Esophagus muscularis mucosa (tissue), 4 donors: ENCODE measurements at regions of chr9 and their contacts with region 1.

Region 1: GRCh38 chr9:132274861-132275260 is 79.9 kb downstream of the SETX start:
- DNase-seq: no peak
- H3K4me3 ChIP-seq: no peak overlapping the region
- H3K27ac ChIP-seq: no peak overlapping the region
- H3K4me1 ChIP-seq: no peaks in the 10 kb centered on the region
- H3K27me3 ChIP-seq: no peaks in the 10 kb centered on the region
- CTCF ChIP-seq: no peak
- EP300 ChIP-seq: no peak
- POLR2A ChIP-seq: no peak

Region 2: DNA sequence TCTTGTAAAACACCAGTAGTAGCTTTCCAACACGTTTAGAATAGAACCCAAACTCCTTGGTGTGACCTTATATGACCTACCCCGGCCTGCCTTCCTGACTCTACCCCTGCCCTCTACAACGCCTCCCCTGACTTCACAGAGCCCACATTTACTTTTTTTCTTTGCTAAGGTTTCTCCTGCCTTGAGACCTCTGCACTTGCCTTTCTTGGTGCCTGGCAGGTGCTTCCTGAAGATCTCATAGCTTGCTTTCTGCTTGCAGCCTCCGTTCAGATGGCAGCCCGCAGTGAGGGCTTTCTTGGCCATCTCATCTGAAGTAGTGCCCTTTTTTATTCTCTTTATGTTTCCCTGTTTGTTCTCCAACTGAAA is 1125.2 kb before region 1 on chr9:
- intact Hi-C with region 1: loop called (anchors 10 kb)
- DNase-seq: no peak
- H3K4me3 ChIP-seq: no peak overlapping the region
- H3K27ac ChIP-seq: no peak overlapping the region
- H3K4me1 ChIP-seq: no peaks in the 10 kb centered on the region
- H3K27me3 ChIP-seq: no peaks in the 10 kb centered on the region
- CTCF ChIP-seq: no peak
- EP300 ChIP-seq: no peak
- POLR2A ChIP-seq: no peak

Region 3: DNA sequence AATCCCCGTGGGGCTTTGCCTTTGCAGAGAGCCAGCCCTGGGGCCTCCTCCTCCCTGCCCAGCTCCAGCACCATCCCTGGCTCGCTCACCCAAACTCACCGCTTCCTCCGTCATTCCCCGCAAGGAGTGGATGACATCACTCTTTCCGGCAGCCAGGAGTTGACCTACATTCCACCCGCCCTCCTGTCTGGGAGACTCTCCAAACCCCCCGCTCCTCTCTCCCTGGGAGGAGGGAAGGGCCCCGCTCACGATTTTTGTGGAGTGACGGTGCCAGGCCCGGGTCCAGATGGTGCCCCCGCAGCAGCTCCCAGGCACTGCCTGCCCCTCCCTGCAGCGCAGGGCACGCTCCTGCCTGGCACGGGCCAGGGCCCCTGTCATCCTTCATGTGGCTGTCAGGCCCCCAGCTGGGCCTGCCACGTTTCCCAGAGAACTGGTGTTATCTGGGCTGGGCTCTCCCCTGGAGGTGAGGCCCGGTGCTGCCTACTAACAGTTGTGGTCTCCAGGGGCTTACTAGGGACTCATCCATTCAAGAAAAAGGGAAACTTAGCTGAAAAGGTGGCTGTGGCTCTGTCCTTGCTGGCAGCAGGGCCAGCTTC is 60.7 kb before region 1 on chr9:
- intact Hi-C with region 1: no loop called
- DNase-seq: peak; percentile 93
- H3K4me3 ChIP-seq: peak overlapping the region in 3 of 4 donors; percentile 24 to 32 (median 25)
- H3K27ac ChIP-seq: peak overlapping the region; percentile 62 to 75 (median 67)
- H3K4me1 ChIP-seq: peaks cover 10 to 15% (median 13%) of the 10 kb centered on the region in 4 donors
- H3K27me3 ChIP-seq: no peaks in the 10 kb centered on the region
- CTCF ChIP-seq: peak in 1 of 3 experiments; percentile 9
- EP300 ChIP-seq: no peak
- POLR2A ChIP-seq: no peak

Region 4: DNA sequence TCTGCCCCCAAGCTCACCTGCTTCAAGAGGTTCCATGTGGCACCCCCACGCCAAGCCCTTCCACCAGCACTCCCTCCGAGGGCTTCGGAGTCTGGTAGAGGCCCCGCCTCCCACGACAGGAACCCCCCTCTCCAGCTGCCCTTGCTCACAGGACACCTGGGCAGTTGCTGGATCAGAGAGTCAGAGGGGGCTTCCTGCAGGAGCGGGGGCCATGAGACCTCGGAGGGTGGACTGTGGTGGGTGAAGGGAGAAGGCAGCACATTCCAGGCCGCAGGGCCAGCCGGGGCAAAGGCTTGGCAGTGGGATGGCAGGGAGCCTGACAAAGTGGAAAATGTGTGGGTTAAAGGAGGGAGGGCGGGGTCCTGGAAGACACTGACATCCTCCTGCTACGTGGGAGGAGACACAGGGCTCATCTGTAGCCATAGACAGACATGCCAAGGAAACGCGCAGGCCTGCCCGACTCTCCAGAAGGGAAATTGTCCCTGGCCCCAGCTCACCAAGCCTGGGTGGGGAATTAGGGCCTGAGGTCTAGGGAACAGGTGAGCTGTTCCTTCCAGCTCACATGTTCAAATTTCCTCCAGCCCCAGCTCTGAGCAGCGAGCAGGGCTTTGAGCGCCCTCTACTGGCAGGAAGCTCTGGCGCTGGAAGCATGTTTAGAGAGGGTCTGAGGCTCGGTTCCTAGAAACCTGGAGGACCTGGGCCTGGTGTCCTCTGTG is 38.8 kb before region 1 on chr9:
- intact Hi-C with region 1: no loop called
- DNase-seq: no peak
- H3K4me3 ChIP-seq: no peak overlapping the region
- H3K27ac ChIP-seq: no peak overlapping the region
- H3K4me1 ChIP-seq: peaks cover 7 to 19% (median 14%) of the 10 kb centered on the region in 4 donors
- H3K27me3 ChIP-seq: peaks cover 0 to 36% (median 4%) of the 10 kb centered on the region in 4 donors
- CTCF ChIP-seq: peak; percentile 84 to 98 (median 90)
- EP300 ChIP-seq: no peak
- POLR2A ChIP-seq: no peak

Region 5: DNA sequence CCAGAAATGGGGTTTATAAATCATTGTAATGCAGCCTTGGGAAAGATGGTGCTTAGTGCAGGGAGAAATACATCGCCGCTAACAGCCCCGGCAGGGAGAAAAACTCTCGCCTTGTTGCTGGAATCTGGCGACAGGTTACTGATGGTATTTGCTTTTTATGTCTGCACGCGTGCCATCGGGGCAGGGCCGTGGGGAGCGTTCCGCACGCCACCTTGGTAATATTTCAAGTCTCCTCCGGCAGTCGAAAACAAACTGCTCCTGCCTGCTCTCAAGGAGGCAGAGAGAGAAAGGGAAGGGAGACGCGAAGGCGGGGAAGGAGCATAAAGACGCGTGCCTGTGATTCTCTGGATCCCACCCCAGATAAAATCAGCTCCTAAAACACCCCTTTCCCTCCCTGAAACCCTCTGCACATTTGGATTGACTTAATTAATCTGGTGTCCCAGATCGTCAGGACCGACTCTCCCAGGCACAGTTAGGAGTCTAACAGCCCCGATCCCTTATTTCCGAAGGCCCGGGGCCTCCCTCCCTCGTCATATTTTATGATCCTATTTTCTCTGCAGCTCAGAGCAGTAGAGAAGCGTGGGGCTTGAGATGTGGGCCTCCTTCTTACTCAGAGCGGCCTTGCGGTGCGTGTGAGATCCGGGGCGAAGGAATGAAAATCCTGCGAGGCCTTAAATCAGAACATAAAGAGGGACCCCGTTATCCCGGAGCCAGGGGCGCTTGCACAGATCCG is 182.8 kb after region 1 on chr9:
- intact Hi-C with region 1: no loop called
- DNase-seq: no peak
- H3K4me3 ChIP-seq: no peak overlapping the region
- H3K27ac ChIP-seq: no peak overlapping the region
- H3K4me1 ChIP-seq: no peaks in the 10 kb centered on the region
- H3K27me3 ChIP-seq: peaks cover 0 to 63% (median 7%) of the 10 kb centered on the region in 4 donors
- CTCF ChIP-seq: no peak
- EP300 ChIP-seq: no peak
- POLR2A ChIP-seq: no peak